GM12878 (cell line): ENCODE measurements at regions of chr15 and their contacts with region 1.

Region 1: GRCh38 chr15:38440353-38441129 is 13.4 kb upstream of the FAM98B start:
- DNase-seq: peak; percentile 44
- ATAC-seq: peak; percentile 92
- H3K4me3 ChIP-seq: no peak overlapping the region
- H3K27ac ChIP-seq: no peak overlapping the region
- H3K4me1 ChIP-seq: peaks cover 8% of the 10 kb centered on the region
- H3K27me3 ChIP-seq: peaks cover 0 to 3% of the 10 kb centered on the region in 2 experiments; a peak in 2 of 4 replicates
- CTCF ChIP-seq: peak; percentile 90 to 94 (median 91)
- EP300 ChIP-seq: no peak
- POLR2A ChIP-seq: no peak
- RAD21 ChIP-seq: peak; percentile 96

Region 2: GRCh38 chr15:38424101-38424552 is 16.4 kb before region 1 on chr15:
- CTCF ChIA-PET with region 1: interaction called, 22 read pairs
- POLR2A ChIA-PET with region 1: no interaction called
- RAD21 ChIA-PET with region 1: interaction called, 17 read pairs
- SMC1A ChIA-PET with region 1: interaction called, 16 read pairs
- in situ Hi-C with region 1: no loop called
- intact Hi-C with region 1: no loop called
- DNase-seq: peak; percentile 48
- ATAC-seq: peak; percentile 79
- H3K4me3 ChIP-seq: peak overlapping the region; percentile 7; the same call in 1 of the 2 replicates
- H3K27ac ChIP-seq: no peak overlapping the region
- H3K4me1 ChIP-seq: peaks cover 5% of the 10 kb centered on the region; the same call in 1 of the 2 replicates
- H3K27me3 ChIP-seq: no peaks in the 10 kb centered on the region
- CTCF ChIP-seq: no peak
- EP300 ChIP-seq: no peak
- POLR2A ChIP-seq: no peak
- RAD21 ChIP-seq: no peak

Region 3: GRCh38 chr15:38474155-38474757 is 33.7 kb after region 1 on chr15:
- CTCF ChIA-PET with region 1: interaction called, 76 read pairs
- POLR2A ChIA-PET with region 1: no interaction called
- RAD21 ChIA-PET with region 1: interaction called, 16 read pairs
- SMC1A ChIA-PET with region 1: interaction called, 56 read pairs
- in situ Hi-C with region 1: no loop called
- intact Hi-C with region 1: loop called (anchors 2 kb)
- DNase-seq: peak; percentile 33
- ATAC-seq: peak; percentile 99
- H3K4me3 ChIP-seq: no peak overlapping the region
- H3K27ac ChIP-seq: no peak overlapping the region
- H3K4me1 ChIP-seq: no peaks in the 10 kb centered on the region
- H3K27me3 ChIP-seq: no peaks in the 10 kb centered on the region
- CTCF ChIP-seq: peak; percentile 67 to 92 (median 74); a peak in 5 of 6 replicates
- EP300 ChIP-seq: no peak
- POLR2A ChIP-seq: no peak
- RAD21 ChIP-seq: peak; percentile 84

Region 4: GRCh38 chr15:38496151-38496550 is 55.6 kb after region 1 on chr15:
- CTCF ChIA-PET with region 1: interaction called, 12 read pairs
- POLR2A ChIA-PET with region 1: no interaction called
- RAD21 ChIA-PET with region 1: interaction called, 6 read pairs
- SMC1A ChIA-PET with region 1: interaction called, 3 read pairs
- in situ Hi-C with region 1: no loop called
- intact Hi-C with region 1: no loop called
- DNase-seq: no peak
- ATAC-seq: no peak
- H3K4me3 ChIP-seq: no peak overlapping the region
- H3K27ac ChIP-seq: no peak overlapping the region
- H3K4me1 ChIP-seq: no peaks in the 10 kb centered on the region
- H3K27me3 ChIP-seq: no peaks in the 10 kb centered on the region
- CTCF ChIP-seq: no peak
- EP300 ChIP-seq: no peak
- POLR2A ChIP-seq: no peak
- RAD21 ChIP-seq: no peak

Region 5: DNA sequence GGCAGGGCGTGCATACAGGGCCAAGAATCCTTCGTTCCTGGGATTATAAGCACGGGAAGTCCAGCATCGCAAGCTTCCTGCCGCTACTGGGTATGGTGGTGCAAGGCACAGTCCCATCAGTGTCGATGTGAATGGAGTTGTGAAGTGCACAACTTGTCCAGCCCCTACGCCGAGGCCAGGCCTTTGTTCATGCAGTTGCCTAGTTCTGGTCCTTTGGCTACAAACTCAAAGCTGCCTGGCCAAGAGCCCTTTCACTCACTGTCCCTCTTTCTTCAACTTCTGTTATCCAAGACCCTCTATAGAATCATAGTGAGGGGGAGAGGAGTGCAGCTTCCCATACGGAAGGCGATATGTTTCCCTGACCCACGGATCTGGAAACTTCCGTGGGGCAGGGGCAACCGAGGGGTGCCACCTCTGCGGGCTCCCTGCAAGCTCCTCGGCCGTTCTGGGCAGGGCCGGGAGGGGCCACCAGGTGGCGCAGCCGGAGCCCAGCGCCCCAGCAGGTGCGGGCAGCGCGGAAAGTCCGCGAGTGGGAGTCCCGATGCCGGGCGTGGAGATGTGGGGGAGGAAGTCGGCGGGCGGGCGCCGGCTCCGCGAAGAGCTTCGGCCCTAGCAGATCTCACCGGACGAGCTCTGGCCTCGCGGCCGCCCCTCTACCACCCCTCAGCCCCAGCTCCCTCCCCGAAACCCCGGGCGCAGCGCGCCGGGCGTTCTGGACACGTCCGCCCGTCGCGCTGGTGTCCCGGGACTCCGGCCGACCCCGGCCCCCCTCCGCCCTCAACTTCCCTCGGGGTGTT is 123.4 kb after region 1 on chr15:
- CTCF ChIA-PET with region 1: interaction called, 12 read pairs
- POLR2A ChIA-PET with region 1: interaction called, 3 read pairs
- RAD21 ChIA-PET with region 1: interaction called, 27 read pairs
- SMC1A ChIA-PET with region 1: interaction called, 17 read pairs
- in situ Hi-C with region 1: no loop called
- intact Hi-C with region 1: loop called (anchors 5 kb)
- DNase-seq: no peak
- ATAC-seq: peak; percentile 77
- H3K4me3 ChIP-seq: peak overlapping the region; percentile 75
- H3K27ac ChIP-seq: peak overlapping the region; percentile 72
- H3K4me1 ChIP-seq: peaks cover 37% of the 10 kb centered on the region
- H3K27me3 ChIP-seq: no peaks in the 10 kb centered on the region
- CTCF ChIP-seq: peak; percentile 88 to 95 (median 94)
- EP300 ChIP-seq: no peak
- POLR2A ChIP-seq: no peak; the same call in 1 of the 2 replicates
- RAD21 ChIP-seq: peak; percentile 75

Region 6: DNA sequence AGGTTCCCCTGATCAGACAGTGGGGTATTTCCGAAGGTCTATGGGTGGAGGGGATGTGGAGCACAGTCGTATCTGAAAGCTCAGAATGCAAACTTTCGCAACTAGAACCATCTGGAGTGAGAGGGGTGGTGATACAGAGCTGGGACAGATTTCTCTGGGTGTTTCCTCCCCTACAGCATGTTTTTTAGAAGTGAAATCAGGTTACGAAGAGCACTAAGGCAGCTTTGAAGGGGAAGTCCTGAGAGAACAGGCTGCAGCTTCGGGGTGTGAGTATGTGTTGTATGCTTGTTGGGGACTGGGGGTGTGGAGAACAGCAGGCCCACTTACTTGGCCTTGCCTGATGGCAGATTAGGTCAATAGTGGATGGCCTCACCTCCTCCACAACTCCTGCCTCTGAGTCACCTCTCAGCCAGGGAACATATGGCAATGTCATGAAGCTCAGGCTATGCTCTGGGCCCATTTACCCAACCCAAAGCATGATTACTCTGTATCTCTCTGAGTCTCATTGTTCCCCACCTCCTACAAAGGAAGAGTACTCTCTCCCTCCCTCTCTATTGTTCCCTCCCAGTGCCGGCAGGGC is 231.2 kb after region 1 on chr15:
- CTCF ChIA-PET with region 1: interaction called, 5 read pairs
- POLR2A ChIA-PET with region 1: interaction called, 4 read pairs
- RAD21 ChIA-PET with region 1: interaction called, 12 read pairs
- SMC1A ChIA-PET with region 1: interaction called, 7 read pairs
- in situ Hi-C with region 1: no loop called
- intact Hi-C with region 1: no loop called
- DNase-seq: peak; percentile 91
- ATAC-seq: peak; percentile 76
- H3K4me3 ChIP-seq: no peak overlapping the region
- H3K27ac ChIP-seq: peak overlapping the region; percentile 77
- H3K4me1 ChIP-seq: peaks cover 56% of the 10 kb centered on the region
- H3K27me3 ChIP-seq: no peaks in the 10 kb centered on the region
- CTCF ChIP-seq: no peak
- EP300 ChIP-seq: peak in 1 of 2 experiments; percentile 7; a peak in 2 of 4 replicates
- POLR2A ChIP-seq: peak; percentile 61
- RAD21 ChIP-seq: no peak; the same call in 1 of the 2 replicates

Region 7: DNA sequence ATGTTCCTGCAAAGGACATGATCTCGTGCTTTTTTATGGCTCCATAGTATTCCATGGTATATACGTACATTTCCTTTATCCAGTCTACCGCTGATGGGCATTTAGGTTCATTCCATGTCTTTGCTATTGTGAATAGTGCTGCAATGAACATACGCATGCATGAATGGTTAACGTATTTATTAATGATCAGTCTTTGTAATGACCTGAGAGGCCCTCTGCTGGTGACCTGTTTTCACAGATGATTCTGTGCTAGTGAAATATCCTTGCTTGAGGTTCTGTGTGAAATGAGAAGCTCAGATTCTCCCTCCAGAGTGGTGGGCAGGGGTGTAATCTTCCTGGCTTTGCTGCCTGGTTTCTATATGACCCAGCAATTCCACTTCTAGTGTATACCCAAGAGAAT is 284.3 kb after region 1 on chr15:
- CTCF ChIA-PET with region 1: interaction called, 17 read pairs
- POLR2A ChIA-PET with region 1: no interaction called
- RAD21 ChIA-PET with region 1: interaction called, 6 read pairs
- SMC1A ChIA-PET with region 1: interaction called, 5 read pairs
- in situ Hi-C with region 1: no loop called
- intact Hi-C with region 1: no loop called
- DNase-seq: no peak
- ATAC-seq: no peak
- H3K4me3 ChIP-seq: no peak overlapping the region
- H3K27ac ChIP-seq: no peak overlapping the region
- H3K4me1 ChIP-seq: no peaks in the 10 kb centered on the region
- H3K27me3 ChIP-seq: no peaks in the 10 kb centered on the region
- CTCF ChIP-seq: no peak
- EP300 ChIP-seq: no peak
- POLR2A ChIP-seq: no peak
- RAD21 ChIP-seq: no peak